Upper lobe of right lung (tissue), 1 donor: ENCODE measurements at regions of chr6 and their contacts with region 1.

Region 1: DNA sequence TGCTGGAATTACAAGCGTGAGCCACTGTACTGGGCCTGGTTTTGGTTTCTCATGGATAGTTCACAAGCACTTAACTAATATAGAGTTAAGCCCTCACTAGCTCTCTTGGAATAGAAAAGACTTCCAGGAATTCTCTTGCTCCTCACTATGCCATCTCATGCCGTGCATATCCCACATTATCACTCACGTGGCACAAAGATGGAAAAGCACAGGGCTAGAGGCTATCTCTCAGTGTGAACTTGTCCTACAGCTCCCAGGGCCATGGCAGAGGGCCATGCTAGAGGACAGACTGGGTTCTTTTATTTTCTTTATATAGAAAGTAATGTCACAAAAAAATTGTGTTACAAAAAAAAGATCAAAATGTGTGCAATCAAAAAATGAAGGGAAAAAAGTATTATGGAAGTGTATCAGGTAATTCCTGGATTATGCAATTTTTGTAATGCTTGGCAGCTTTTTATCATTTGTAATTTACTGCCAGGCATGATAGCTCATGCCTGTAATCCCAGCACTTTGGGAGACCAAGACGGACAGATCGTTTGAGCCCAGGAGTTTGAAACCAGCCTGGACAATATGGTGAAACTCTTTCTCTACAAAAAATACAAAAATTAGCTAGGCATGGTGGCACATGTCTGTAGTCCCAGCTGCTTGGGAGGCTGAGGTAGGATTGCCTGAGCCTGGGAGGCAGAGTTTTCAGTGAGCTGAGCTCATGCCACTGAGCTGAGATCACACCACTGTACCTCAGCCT is 6.4 kb upstream of the SLC2A12 start:
- DNase-seq: no peak
- ATAC-seq: no peak
- H3K4me3 ChIP-seq: no peak overlapping the region
- H3K27ac ChIP-seq: no peak overlapping the region
- H3K4me1 ChIP-seq: no peaks in the 10 kb centered on the region
- H3K27me3 ChIP-seq: no peaks in the 10 kb centered on the region
- CTCF ChIP-seq: no peak

Region 2: GRCh38 chr6:133977983-133978895 is 80.6 kb before region 1 on chr6:
- intact Hi-C with region 1: loop called (anchors 5 kb)
- DNase-seq: no peak
- ATAC-seq: peak; percentile 85
- H3K4me3 ChIP-seq: no peak overlapping the region
- H3K27ac ChIP-seq: peak overlapping the region; percentile 12
- H3K4me1 ChIP-seq: peaks cover 10% of the 10 kb centered on the region
- H3K27me3 ChIP-seq: no peaks in the 10 kb centered on the region
- CTCF ChIP-seq: no peak

Region 3: DNA sequence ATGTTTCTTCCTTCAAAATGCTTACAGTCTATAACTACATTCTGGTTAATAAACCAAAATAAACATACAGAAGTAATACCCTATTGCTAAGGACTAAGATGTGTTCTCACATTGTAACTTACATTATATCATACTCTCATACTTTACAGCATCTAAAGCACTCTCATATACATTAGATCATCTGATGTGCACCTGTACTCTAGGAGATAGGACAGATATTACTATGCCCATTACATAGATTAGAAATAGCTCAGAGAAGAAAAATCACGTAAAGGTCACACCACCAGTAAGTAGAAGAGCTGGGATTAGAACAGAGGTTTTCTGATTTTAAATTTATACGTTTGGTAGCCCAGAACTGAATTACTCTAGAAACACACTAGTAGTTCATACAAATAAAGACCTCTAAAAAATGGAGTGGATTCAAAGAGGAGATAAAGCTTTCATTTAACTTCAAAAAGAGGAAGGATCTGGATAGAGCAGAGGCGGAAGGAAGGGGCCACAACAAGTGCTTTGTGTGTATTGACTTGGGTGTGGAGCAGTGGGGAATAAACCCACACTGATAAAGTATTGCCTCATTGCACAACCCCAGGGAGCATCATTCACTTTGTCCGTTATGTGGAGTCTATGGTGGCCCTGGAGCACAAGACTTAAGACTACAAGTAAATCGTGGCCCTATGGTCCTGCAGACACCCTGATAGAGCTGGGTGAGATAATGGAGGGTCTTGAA is 37.2 kb before region 1 on chr6:
- intact Hi-C with region 1: no loop called
- DNase-seq: no peak
- ATAC-seq: no peak
- H3K4me3 ChIP-seq: no peak overlapping the region
- H3K27ac ChIP-seq: no peak overlapping the region
- H3K4me1 ChIP-seq: no peaks in the 10 kb centered on the region
- H3K27me3 ChIP-seq: no peaks in the 10 kb centered on the region
- CTCF ChIP-seq: no peak